Sciatic nerve (tissue), 2 donors: ENCODE measurements at regions of chr17 and their contacts with region 1.

Region 1: GRCh38 chr17:29148790-29149430 is 31.3 kb downstream of the MYO18A start:
- DNase-seq: peak; percentile 96
- ATAC-seq: peak; percentile 97

Region 2: DNA sequence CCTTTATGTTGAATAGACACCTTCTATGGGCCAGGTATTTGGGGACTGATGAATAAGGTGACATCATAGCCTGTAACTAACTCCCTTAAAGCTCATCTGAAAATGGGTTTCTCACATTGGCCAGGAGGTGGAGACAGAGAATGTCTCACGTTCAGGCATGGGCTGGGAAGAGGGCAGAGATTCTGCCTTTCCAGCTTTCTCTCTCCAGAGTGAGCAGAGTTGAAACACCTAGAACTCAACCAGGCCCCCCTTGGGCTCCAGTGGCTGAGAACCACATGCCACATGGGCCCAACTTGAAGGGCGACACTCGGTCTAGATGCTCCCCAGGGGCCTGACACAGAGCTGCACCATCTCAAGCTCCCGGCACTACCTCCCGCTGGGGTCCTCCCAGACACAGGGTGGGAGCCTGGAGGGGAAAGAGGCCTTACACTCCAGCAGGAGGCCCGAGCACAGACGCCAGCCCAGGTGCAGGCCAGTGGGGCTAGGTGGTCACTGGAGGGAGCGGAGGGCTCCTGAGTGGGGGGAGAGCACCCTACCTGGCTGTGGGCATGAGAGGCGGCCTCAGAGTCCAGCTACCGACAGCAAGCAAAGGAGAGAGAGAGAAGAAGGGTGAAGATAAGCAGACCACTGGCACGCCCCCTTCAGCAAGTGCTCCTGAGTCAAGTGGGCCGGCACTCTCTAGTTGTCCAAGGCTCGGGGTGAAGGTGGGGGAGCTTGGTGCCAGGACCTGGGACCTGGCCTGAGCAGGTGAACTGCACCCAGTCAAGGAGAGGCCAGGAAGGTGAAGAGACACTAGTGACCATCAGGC is 24.6 kb before region 1 on chr17:
- intact Hi-C with region 1: no loop called
- DNase-seq: no peak
- ATAC-seq: peak; percentile 81

Region 3: DNA sequence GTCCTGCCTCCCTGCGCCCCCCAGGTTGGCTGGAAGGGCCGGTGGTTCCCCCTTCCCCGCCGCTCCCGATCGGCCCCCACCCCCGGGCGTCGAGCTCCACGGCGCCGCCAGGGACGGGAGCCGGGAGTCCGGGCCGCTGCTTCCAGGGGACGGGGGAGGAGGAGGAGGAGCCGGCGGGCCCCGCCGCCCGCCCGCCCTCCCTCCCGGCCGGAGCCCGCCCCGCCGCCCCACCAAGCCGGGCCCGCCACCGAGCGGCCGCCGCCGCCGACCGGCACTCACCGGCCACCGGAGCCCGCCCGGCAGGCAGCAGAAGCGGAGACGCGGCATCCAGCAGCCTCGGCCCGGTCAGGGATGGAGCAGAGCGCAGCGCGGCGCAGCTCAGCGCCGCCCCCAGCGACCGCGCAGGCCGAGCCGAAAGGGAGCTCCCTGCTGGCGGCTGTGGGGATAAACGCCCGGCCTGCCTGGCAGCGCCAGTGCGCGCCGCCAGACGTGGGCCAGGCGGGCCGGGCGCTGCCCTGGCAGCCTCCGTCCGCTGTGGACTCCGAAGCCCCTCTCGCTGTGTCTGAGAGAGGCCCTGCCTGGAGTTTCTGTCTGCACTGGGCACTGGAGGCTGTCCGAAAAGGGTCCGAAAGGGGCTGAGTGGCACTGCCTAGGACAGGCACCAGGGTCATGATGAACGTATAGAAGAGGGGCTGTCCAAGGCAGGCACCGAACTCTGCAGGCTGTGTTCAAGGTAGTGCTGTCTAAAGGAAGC is 31.3 kb after region 1 on chr17 and contains the start of gene MYO18A:
- intact Hi-C with region 1: loop called (anchors 5 kb)
- DNase-seq: peak; percentile 88
- ATAC-seq: peak; percentile 85
- total RNA-seq, gene MYO18A: 109 TPM

Region 4: DNA sequence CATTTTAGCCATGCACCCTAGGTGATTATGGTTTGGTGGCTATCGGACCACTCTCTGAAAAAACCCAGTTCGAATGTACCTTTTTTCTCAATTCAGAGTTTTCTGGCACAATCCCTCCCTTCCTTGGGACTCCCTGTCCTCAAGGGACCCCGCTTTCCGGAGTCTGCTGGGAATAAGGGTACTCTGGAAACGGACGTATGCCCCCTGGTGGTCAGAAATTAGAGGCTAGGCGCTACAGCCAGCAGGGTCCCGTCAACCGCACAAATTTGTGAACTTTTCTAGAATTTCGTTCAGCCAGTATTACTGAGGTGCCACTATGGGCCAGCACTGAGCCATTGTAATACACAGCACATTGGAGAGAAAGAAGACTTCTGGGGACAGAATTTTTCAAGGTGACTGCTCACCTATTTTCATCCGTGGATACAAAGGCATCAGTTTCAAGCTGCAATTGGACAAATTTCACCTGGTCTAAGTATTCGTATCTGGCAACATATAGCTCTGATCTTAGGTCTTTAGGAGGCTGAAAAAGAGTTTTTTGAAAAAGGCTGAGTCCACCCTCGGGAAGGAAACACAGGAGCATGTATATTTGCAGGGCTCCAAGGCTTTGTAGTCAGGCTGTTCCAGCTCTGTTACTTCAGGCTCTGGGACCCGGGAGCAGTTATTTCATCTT is 70.6 kb after region 1 on chr17:
- intact Hi-C with region 1: loop called (anchors 5 kb)
- DNase-seq: peak; percentile 89
- ATAC-seq: peak; percentile 95